ENCODE measurements at regions of chr2 and their contacts with region 1.

Region 1: GRCh38 chr2:68734688-68735525 is at the start of gene ARHGAP25:
- DNase-seq: peak; percentile 61
- H3K4me3 Mint-ChIP-seq: no peak within 1 kb of the TSS
- H3K27ac Mint-ChIP-seq: no peak within 1 kb of the TSS
- H3K4me1 Mint-ChIP-seq: peaks cover 42% of the 10 kb centered on the region
- H3K27me3 Mint-ChIP-seq: no peaks in the 10 kb centered on the region
- total RNA-seq, gene ARHGAP25: 71.6 and 74.2 TPM in 2 replicates

Region 2: GRCh38 chr2:68689553-68690537 is 45.1 kb before region 1 on chr2:
- intact Hi-C with region 1: loop called (anchors 2 kb)
- DNase-seq: no peak
- H3K4me3 Mint-ChIP-seq: peak overlapping the region; percentile 32
- H3K27ac Mint-ChIP-seq: peak overlapping the region; percentile 83
- H3K4me1 Mint-ChIP-seq: peaks cover 21% of the 10 kb centered on the region
- H3K27me3 Mint-ChIP-seq: peaks cover 7% of the 10 kb centered on the region

Region 3: DNA sequence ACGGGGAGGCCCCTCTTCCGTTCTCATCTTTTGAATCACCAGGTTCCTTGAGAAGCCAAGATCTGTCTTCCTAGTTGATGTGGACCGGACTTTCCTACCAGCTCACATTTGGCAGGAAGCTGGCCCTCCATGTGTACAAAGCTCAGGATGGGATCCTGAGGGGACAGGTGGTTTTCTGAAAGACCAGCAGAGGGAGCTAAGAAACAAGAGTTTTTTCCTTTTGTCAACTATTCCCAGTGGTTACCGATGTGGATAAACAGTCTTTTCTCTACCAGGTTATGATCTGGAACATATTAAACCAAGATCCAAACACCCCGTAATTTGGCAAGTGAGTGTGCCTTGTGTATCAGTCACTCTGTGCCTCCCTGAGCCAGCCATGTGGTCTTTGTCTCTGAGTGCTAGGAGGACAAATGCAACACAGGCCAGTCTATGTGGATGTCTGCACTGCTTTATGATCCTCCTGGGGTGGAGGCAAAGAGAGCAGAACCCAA is 25.4 kb before region 1 on chr2:
- intact Hi-C with region 1: loop called (anchors 1 kb)
- DNase-seq: no peak
- H3K4me3 Mint-ChIP-seq: no peak overlapping the region
- H3K27ac Mint-ChIP-seq: no peak overlapping the region
- H3K4me1 Mint-ChIP-seq: peaks cover 36% of the 10 kb centered on the region
- H3K27me3 Mint-ChIP-seq: peaks cover 6% of the 10 kb centered on the region

Region 4: GRCh38 chr2:68721482-68722101 is 13.3 kb before region 1 on chr2:
- intact Hi-C with region 1: loop called (anchors 1 kb)
- DNase-seq: peak; percentile 44
- H3K4me3 Mint-ChIP-seq: peak overlapping the region; percentile 54
- H3K27ac Mint-ChIP-seq: peak overlapping the region; percentile 91
- H3K4me1 Mint-ChIP-seq: peaks cover 100% of the 10 kb centered on the region
- H3K27me3 Mint-ChIP-seq: peaks cover 2% of the 10 kb centered on the region

Region 5: DNA sequence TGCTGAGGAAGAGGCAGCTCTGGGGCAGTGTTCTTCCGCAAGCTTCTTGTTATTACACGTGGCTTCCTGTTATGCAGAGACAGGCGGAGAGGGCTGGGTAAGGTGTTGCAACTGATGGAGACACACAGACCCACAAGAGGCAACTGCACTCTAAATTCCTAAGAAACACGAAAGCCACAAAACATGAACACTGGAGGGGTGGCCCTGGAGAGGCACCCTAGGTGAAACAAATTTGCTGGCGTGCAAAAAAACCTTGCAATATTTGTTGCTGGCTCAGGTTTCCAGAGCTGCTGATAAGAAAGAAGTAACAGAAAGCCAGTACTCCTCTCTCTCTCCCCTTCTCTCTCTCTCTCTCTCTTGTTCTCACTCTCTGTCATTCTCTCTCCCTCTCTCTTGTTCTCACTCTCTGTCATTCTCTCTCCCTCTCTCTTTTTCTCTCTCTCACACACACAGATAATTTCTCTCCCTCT is 31.5 kb after region 1 on chr2:
- intact Hi-C with region 1: loop called (anchors 1 kb)
- DNase-seq: peak; percentile 75
- H3K4me3 Mint-ChIP-seq: peak overlapping the region; percentile 65
- H3K27ac Mint-ChIP-seq: peak overlapping the region; percentile 92
- H3K4me1 Mint-ChIP-seq: peaks cover 96% of the 10 kb centered on the region
- H3K27me3 Mint-ChIP-seq: no peaks in the 10 kb centered on the region

Region 6: DNA sequence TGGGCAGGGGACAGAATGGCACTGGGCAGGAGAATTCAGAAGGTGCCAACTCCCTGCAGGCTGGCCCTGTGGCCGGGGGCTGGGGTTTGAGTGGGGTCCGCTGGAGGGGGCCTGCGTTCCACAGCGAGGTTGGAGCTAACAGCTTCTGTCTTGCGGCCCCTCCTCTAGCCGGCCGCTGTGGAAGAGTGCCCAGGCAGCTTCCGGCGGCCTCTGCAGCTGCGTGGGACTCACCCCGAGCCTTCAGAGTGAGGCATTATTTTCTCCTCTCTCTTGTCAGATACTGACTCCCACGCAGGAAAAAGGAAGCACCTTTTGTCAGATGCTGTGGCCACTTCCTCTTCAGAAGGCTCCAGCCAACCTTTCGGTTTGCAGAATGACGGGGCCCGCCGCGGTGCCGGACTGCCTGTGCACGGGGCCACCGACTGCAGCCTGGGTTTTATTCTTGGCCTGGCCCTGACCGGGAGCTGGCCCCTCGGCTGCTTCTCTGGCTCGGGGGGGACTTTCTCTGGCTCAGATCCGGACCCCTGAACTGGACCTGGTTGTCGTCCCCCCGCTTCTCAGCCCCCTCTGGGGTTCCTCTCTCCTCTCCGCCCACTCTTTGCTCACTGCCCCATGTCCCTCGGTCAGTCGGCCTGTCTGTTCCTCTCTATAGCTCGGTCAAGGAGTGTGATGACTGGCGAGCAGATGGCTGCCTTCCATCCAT is 39.8 kb after region 1 on chr2:
- intact Hi-C with region 1: loop called (anchors 1 kb)
- DNase-seq: peak; percentile 66
- H3K4me3 Mint-ChIP-seq: peak overlapping the region; percentile 81
- H3K27ac Mint-ChIP-seq: peak overlapping the region; percentile 91
- H3K4me1 Mint-ChIP-seq: peaks cover 89% of the 10 kb centered on the region
- H3K27me3 Mint-ChIP-seq: no peaks in the 10 kb centered on the region

Measured in activated T-helper 1 cell treated with anti-CD3 and anti-CD28 coated beads, Interleukin-12 subunit alpha, Interleukin-12 subunit beta, Interleukin-2, Interleukin-4 antibody, amounts not matched to agents 30 ng/mL and 10 ng/mL and 1 ng/mL, durations not matched to agents 14 hours and 24 hours and 36 hours (primary cell).